Heart right ventricle (tissue), 16 donors: ENCODE measurements at regions of chr4 and their contacts with region 1.

Region 1: GRCh38 chr4:38675146-38676121 is 11.4 kb downstream of the KLF3 start:
- DNase-seq: peak in 1 of 2 donors; percentile 85
- ATAC-seq: peak in 7 of 8 donors; percentile 29 to 64 (median 49)
- H3K4me3 ChIP-seq: peak overlapping the region in 2 of 10 donors; percentile 16 to 21
- H3K27ac ChIP-seq: peak overlapping the region in 9 of 10 donors; percentile 78 to 100 (median 99)
- H3K4me1 ChIP-seq: peaks cover 27 to 93% (median 83%) of the 10 kb centered on the region in 9 donors
- H3K27me3 ChIP-seq: no peaks in the 10 kb centered on the region
- CTCF ChIP-seq: peak; percentile 83 to 96 (median 92)

Region 2: GRCh38 chr4:37561803-37562207 is 1113.6 kb before region 1 on chr4:
- intact Hi-C with region 1: no loop called
- DNase-seq: no peak
- ATAC-seq: no peak
- H3K4me3 ChIP-seq: no peak overlapping the region
- H3K27ac ChIP-seq: no peak overlapping the region
- H3K4me1 ChIP-seq: no peaks in the 10 kb centered on the region
- H3K27me3 ChIP-seq: no peaks in the 10 kb centered on the region
- CTCF ChIP-seq: no peak

Region 3: DNA sequence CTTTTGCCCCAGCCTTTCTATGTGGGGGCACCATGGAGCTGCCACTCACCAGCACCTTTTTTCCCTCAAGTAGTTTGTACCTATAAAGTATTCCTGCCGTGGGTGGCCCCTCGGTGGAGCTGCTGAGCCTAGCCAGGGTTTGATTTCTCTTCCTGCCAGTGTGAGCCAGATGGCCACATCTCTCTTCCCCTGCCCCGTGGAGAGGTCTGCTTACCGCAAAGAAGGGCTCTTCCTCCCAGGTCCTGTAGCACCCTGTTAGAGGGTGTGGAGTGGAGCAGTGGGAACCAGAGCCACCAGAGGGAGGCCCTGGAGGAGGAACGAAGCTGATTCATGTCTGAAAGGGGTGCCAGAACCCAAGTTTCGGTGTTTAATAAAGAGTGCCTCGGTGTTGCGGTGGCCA is 619.9 kb before region 1 on chr4:
- intact Hi-C with region 1: loop called in 6 of 10 experiments (anchors 5 to 10 kb)
- DNase-seq: no peak
- ATAC-seq: peak; percentile 5 to 53 (median 34)
- H3K4me3 ChIP-seq: peak overlapping the region in 4 of 10 donors; percentile 2 to 26 (median 11)
- H3K27ac ChIP-seq: peak overlapping the region; percentile 21 to 94 (median 79)
- H3K4me1 ChIP-seq: peaks cover 0 to 50% (median 21%) of the 10 kb centered on the region in 9 donors
- H3K27me3 ChIP-seq: no peaks in the 10 kb centered on the region
- CTCF ChIP-seq: peak in 4 of 9 donors; percentile 6 to 25 (median 22)

Region 4: DNA sequence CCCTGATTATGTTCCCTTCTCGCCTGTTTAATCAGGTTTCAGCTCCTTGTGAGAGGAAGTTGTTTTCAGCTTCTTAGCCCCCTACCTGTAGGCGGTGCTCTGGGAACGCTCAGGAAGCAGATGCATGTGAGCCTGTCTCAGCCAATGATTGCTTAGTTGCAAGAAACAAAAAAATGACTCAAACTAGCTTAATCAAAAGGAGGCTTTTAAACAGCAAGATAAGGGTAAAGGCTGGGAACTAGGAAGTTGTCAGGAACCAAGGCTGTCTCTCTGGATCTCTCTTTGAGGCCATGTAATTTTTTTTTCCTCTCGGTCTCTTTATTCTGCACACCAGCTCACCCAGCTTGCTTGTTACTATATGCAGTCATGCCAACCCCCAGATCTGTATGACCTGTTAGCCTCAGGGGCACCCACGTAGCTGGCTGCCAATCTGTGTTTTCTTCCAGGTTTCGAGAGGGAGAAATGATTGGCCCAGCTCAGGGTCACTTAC is 606.1 kb before region 1 on chr4:
- intact Hi-C with region 1: loop called in 7 of 10 experiments (anchors 5 to 10 kb)
- DNase-seq: no peak
- ATAC-seq: peak in 6 of 8 donors; percentile 23 to 54 (median 36)
- H3K4me3 ChIP-seq: no peak overlapping the region
- H3K27ac ChIP-seq: peak overlapping the region in 7 of 10 donors; percentile 30 to 86 (median 59)
- H3K4me1 ChIP-seq: peaks cover 6 to 80% (median 53%) of the 10 kb centered on the region in 9 donors
- H3K27me3 ChIP-seq: no peaks in the 10 kb centered on the region
- CTCF ChIP-seq: peak in 6 of 9 donors; percentile 18 to 61 (median 37)

Region 5: GRCh38 chr4:38319456-38320342 is 355.7 kb before region 1 on chr4:
- intact Hi-C with region 1: loop called (anchors 2 to 5 kb)
- DNase-seq: peak; percentile 96 to 97
- ATAC-seq: peak; percentile 74 to 91 (median 85)
- H3K4me3 ChIP-seq: peak overlapping the region in 9 of 10 donors; percentile 22 to 45 (median 37)
- H3K27ac ChIP-seq: peak overlapping the region; percentile 14 to 92 (median 86)
- H3K4me1 ChIP-seq: peaks cover 6 to 48% (median 26%) of the 10 kb centered on the region in 9 donors
- H3K27me3 ChIP-seq: no peaks in the 10 kb centered on the region
- CTCF ChIP-seq: peak; percentile 99 to 100 (median 99)

Region 6: DNA sequence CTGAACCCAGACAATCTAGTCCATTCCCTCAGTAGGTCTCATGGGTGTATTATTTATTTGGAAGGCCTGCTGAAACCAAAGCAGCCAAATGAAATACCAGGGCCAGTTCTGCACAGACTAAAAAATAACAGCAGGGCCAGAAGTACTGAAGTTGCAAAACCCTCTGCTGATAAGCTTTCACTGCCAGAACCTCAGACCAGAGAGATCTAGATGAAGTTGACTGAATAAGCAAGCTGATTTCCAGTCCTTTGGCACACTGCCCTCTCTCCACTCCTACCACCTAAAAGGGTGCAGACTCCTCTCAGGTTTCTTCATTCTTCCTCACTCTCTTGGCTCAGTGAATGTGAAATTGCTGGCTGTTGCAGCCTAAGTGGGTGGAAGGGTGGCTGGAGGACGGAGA is 288.1 kb before region 1 on chr4:
- intact Hi-C with region 1: loop called in 1 of 10 experiments (anchors 10 kb)
- DNase-seq: peak; percentile 26 to 43
- ATAC-seq: peak; percentile 58 to 93 (median 85)
- H3K4me3 ChIP-seq: no peak overlapping the region
- H3K27ac ChIP-seq: peak overlapping the region in 5 of 10 donors; percentile 15 to 50 (median 39)
- H3K4me1 ChIP-seq: peaks cover 6 to 32% (median 28%) of the 10 kb centered on the region in 9 donors
- H3K27me3 ChIP-seq: no peaks in the 10 kb centered on the region
- CTCF ChIP-seq: no peak

Region 7: DNA sequence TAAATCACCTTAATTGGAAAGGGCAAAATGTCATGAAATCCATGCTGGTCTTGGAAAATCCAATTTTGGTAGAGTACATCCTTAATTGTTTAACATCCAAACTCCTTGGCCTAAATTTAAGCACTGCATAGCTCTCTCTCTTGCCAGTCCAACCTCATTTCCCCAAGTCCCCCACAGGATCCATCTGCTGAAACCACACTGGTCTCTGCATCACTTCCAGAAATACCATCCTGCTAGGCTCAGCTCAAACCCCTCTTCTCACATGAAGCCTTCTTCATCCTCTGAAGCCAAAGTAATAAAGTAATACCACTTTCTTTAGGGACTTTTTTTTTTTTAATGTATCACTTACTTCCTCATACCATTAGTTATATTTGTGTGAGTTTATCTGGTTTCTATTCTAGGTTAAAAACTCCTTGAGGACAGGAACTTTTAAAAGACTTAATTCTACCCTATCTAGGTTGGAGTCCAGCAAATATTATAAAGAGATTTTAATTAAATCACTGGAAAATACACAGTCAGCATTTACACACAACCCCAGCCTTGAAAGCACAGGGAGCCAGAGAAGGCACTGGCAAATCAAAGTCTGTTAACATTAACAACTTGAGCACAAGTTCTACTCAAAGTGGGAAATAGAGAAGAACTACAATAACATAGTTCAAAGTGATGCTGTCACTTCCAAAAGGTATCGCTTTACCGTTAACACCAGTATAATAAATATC is 28.2 kb before region 1 on chr4:
- intact Hi-C with region 1: loop called in 1 of 10 experiments (anchors 1 kb)
- DNase-seq: no peak
- ATAC-seq: no peak
- H3K4me3 ChIP-seq: no peak overlapping the region
- H3K27ac ChIP-seq: no peak overlapping the region
- H3K4me1 ChIP-seq: peaks cover 0 to 4% (median 0%) of the 10 kb centered on the region in 9 donors
- H3K27me3 ChIP-seq: no peaks in the 10 kb centered on the region
- CTCF ChIP-seq: no peak

Region 8: DNA sequence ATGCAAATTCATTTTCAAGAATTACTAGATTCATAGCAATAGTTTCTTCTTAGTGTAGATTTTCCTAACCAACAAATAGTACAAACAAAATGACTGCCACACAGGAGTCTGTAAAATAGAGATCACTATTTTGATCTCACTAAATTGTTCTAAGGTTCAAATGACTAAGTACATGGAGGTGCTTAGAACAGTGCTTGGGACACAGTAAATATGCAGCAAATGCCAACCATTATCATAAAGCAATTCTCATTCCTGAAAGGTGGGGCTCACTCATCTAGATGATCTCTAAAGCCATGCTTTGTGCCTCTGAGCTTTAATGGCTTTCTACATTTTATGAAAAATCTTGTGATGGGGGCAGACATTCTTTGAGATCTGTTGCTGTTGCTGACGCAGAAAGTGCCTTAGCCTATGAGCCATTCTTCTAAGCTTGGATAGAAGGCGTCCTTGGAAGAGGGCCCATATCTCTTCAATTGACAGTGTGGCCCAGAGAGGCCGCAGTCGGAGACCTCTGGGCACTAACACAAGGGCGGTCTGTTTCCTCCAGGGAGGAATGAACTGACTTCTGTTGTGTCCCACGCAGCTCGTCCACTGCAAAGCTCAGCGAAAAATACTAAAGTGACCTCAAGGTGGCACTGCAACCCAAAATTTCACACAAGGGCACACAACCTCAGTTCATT is 83.8 kb after region 1 on chr4:
- intact Hi-C with region 1: no loop called
- DNase-seq: peak; percentile 31 to 75
- ATAC-seq: peak; percentile 75 to 92 (median 86)
- H3K4me3 ChIP-seq: no peak overlapping the region
- H3K27ac ChIP-seq: peak overlapping the region in 1 of 10 donors; percentile 10
- H3K4me1 ChIP-seq: peaks cover 0 to 43% (median 4%) of the 10 kb centered on the region in 9 donors
- H3K27me3 ChIP-seq: no peaks in the 10 kb centered on the region
- CTCF ChIP-seq: peak; percentile 50 to 83 (median 75)